ENCODE measurements at regions of chr12 and their contacts with region 1.

Region 1: GRCh38 chr12:91984556-91984955 is 161.1 kb downstream of the BTG1 start:
- DNase-seq: no peak

Region 2: GRCh38 chr12:92133795-92134637 is 149.5 kb after region 1 on chr12:
- intact Hi-C with region 1: loop called in 1 of 2 experiments (anchors 5 kb)
- DNase-seq: no peak